ENCODE measurements at regions of chr7 and their contacts with region 1.

Region 1: GRCh38 chr7:82985144-82985802 is 177.4 kb downstream of the PCLO start:
- DNase-seq: no peak
- ATAC-seq: no peak
- H3K4me3 Mint-ChIP-seq: no peak overlapping the region
- H3K27ac Mint-ChIP-seq: no peak overlapping the region
- H3K4me1 Mint-ChIP-seq: no peaks in the 10 kb centered on the region
- H3K27me3 Mint-ChIP-seq: no peaks in the 10 kb centered on the region

Region 2: DNA sequence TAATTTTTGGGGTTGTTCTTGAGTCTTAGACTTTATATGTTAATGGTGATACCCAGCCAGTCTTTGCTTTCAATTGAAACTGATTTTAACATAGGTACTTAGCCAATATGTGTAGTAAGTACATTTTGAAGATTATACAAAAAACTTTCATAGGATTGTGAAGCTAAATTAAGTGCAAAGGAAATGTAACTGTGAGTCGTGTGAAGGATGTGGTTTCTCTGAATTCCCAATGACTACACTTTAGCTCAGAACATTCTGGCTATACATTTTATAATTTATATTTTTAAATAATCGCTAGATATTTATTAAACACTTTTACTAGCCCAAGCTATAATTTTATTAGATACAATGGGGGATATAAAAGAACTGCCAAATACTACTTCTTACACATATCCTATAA is 181.9 kb before region 1 on chr7:
- CTCF ChIA-PET with region 1: no interaction called
- POLR2A ChIA-PET with region 1: no interaction called
- intact Hi-C with region 1: no loop called
- DNase-seq: no peak
- ATAC-seq: no peak
- H3K4me3 Mint-ChIP-seq: no peak overlapping the region
- H3K27ac Mint-ChIP-seq: no peak overlapping the region
- H3K4me1 Mint-ChIP-seq: no peaks in the 10 kb centered on the region
- H3K27me3 Mint-ChIP-seq: no peaks in the 10 kb centered on the region

Region 3: DNA sequence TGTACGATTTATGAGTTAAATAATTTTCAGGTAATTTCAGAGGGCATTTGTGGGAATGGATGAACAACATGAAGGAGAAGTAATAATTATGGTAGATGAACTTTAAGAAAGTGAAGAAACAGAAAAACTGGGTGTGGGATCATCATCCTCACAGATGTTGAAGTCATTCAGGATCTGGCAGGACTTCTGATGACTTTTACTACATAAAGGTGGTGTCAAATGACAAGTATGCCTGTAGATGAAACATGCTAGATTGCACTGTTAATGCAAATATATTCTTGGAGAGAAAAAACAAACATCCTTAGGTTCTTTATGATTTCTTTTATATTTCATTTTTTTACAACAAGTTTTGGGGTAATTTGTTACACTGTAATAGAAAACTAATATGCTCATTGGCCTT is 52.8 kb before region 1 on chr7:
- CTCF ChIA-PET with region 1: no interaction called
- POLR2A ChIA-PET with region 1: no interaction called
- intact Hi-C with region 1: loop called in 1 of 2 experiments (anchors 5 kb)
- DNase-seq: no peak
- ATAC-seq: no peak
- H3K4me3 Mint-ChIP-seq: no peak overlapping the region
- H3K27ac Mint-ChIP-seq: no peak overlapping the region
- H3K4me1 Mint-ChIP-seq: no peaks in the 10 kb centered on the region
- H3K27me3 Mint-ChIP-seq: no peaks in the 10 kb centered on the region

Measured in activated CD4-positive, alpha-beta T cell treated with anti-CD3 and anti-CD28 coated beads for 36 hours (primary cell).